Natural killer cell (primary cell): ENCODE measurements at regions of chr15 and their contacts with region 1.

Region 1: GRCh38 chr15:91942676-91943576 is 89.4 kb downstream of the SLCO3A1 start:
- DNase-seq: peak; percentile 36 to 70
- ATAC-seq: peak; percentile 93 to 98 (median 97)
- H3K4me3 ChIP-seq: no peak overlapping the region
- H3K4me3 Mint-ChIP-seq: peak overlapping the region; percentile 83
- H3K27ac ChIP-seq: peak overlapping the region; percentile 59
- H3K27ac Mint-ChIP-seq: peak overlapping the region; percentile 75 to 89
- H3K4me1 ChIP-seq: peaks cover 43% of the 10 kb centered on the region
- H3K4me1 Mint-ChIP-seq: peaks cover 86 to 93% of the 10 kb centered on the region in 2 donors
- H3K27me3 ChIP-seq: no peaks in the 10 kb centered on the region
- H3K27me3 Mint-ChIP-seq: no peaks in the 10 kb centered on the region
- CTCF ChIP-seq: no peak

Region 2: DNA sequence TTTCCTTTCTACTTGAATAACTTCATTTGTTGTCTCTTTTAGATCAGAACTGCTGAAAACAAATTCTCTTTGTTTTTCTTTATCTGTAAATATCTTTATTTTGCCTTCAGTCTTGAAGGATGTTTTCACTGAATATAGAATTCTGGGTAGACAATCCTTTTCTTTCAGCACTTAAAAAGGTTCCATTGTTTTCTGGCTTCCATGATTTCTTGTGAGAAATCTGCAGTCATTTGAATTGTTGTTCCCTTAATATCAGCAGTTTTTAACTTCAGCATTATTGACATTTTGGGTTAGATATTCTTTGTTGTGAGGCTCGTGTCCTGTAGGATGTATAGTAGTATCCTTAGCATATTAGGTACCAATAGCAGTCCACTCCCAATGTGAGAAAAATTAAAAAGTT is 777.1 kb before region 1 on chr15:
- intact Hi-C with region 1: no loop called
- DNase-seq: no peak
- ATAC-seq: no peak
- H3K4me3 ChIP-seq: no peak overlapping the region
- H3K4me3 Mint-ChIP-seq: no peak overlapping the region
- H3K27ac ChIP-seq: no peak overlapping the region
- H3K27ac Mint-ChIP-seq: no peak overlapping the region
- H3K4me1 ChIP-seq: no peaks in the 10 kb centered on the region
- H3K4me1 Mint-ChIP-seq: no peaks in the 10 kb centered on the region
- H3K27me3 ChIP-seq: peaks cover 5% of the 10 kb centered on the region
- H3K27me3 Mint-ChIP-seq: peaks cover 7 to 24% of the 10 kb centered on the region in 2 donors
- CTCF ChIP-seq: no peak

Region 3: GRCh38 chr15:91992945-91993344 is 50.0 kb after region 1 on chr15:
- intact Hi-C with region 1: loop called (anchors 5 kb)
- DNase-seq: no peak
- ATAC-seq: no peak
- H3K4me3 ChIP-seq: no peak overlapping the region
- H3K4me3 Mint-ChIP-seq: no peak overlapping the region
- H3K27ac ChIP-seq: no peak overlapping the region
- H3K27ac Mint-ChIP-seq: peak overlapping the region in 1 of 2 donors; percentile 0
- H3K4me1 ChIP-seq: no peaks in the 10 kb centered on the region
- H3K4me1 Mint-ChIP-seq: peaks cover 59 to 62% of the 10 kb centered on the region in 2 donors
- H3K27me3 ChIP-seq: no peaks in the 10 kb centered on the region
- H3K27me3 Mint-ChIP-seq: no peaks in the 10 kb centered on the region
- CTCF ChIP-seq: no peak

Region 4: GRCh38 chr15:92492551-92493115 is 549.7 kb after region 1 on chr15:
- intact Hi-C with region 1: no loop called
- DNase-seq: no peak
- ATAC-seq: no peak
- H3K4me3 ChIP-seq: no peak overlapping the region
- H3K4me3 Mint-ChIP-seq: no peak overlapping the region
- H3K27ac ChIP-seq: no peak overlapping the region
- H3K27ac Mint-ChIP-seq: no peak overlapping the region
- H3K4me1 ChIP-seq: no peaks in the 10 kb centered on the region
- H3K4me1 Mint-ChIP-seq: no peaks in the 10 kb centered on the region
- H3K27me3 ChIP-seq: no peaks in the 10 kb centered on the region
- H3K27me3 Mint-ChIP-seq: peaks cover 5 to 15% of the 10 kb centered on the region in 2 donors
- CTCF ChIP-seq: no peak